HepG2 (cell line): ENCODE measurements at regions of chr9 and their contacts with region 1.

Region 1: DNA sequence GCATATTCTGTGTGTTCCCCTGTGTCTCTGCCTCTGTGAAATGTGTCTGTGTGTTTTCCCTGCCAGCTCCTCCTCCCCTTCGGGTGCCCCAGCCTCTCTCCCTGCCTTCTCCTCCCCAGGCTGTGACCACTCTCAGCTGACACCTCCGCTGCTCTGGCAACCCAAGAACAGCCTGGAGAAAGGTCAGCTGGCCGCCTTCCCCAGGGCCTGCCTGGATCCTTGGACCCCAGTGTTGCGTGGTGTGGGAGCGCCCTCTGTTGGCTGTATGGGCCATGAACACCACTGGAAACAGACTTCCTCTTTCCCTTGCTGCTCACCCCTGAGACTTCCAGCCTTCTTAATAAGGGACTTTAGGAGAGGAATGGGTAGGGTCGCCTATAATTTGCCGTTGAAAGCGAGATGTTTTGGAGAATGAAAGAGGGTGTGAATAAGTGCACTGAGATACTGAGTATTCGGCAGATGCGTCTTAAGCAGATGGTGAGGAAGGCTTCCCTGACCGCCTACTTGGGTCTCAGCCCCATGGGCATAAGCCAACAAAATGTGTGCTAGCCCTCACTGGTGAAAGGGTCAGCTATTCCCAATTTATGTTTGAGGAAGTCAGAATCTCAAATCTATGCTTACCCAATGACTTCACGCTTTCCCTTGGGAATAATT is 114.9 kb upstream of the TRIM32 start:
- DNase-seq: peak; percentile 64
- ATAC-seq: peak; percentile 84
- H3K4me3 ChIP-seq: no peak overlapping the region
- H3K27ac ChIP-seq: no peak overlapping the region
- H3K4me1 ChIP-seq: peaks cover 74% of the 10 kb centered on the region
- H3K27me3 ChIP-seq: no peaks in the 10 kb centered on the region
- CTCF ChIP-seq: peak; percentile 99
- EP300 ChIP-seq: no peak
- POLR2A ChIP-seq: no peak
- RAD21 ChIP-seq: peak; percentile 96

Region 2: DNA sequence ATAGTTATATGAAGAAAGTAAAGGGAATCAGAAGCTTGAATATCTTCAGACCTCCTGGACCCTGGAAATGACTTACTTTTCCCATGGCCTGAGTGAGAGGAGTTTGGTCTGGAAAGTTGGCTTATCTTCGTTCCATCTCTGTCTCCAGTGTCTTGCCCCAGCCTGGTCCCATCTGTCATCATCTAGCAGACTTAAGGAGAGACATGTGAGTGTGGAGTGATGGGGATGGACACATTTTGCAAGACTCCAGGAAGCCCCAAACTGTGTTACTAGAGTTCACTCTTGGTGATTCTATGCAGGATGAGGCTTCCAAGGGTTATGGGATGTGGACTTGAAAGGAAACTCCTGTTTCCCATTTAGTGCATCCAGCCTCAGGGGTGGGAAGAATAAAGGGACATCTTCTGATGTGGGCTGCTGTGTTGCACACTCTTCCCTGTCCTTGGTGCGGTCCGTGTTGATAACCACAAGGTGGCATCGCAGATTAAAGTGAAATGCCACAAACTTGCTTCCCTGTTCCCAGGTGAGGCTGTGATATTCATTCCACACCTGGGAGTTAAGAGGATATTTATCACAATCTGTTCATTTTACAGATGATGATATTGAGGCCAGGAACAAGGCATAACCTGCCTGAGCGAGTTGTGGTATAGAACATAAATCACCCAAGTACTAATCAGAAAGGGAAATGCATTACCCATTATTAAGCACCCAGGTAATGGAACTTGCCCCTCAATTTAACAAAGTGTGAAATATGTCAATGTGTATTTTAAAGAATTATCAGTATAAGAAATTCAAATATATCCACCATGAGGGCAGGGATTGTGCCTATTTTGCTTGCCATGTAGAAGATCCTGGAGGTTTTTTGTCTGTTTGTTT is 688.5 kb before region 1 on chr9:
- CTCF ChIA-PET with region 1: no interaction called
- POLR2A ChIA-PET with region 1: no interaction called
- in situ Hi-C with region 1: no loop called
- intact Hi-C with region 1: loop called (anchors 2 kb)
- DNase-seq: peak; percentile 55
- ATAC-seq: peak; percentile 91
- H3K4me3 ChIP-seq: no peak overlapping the region
- H3K27ac ChIP-seq: no peak overlapping the region
- H3K4me1 ChIP-seq: peaks cover 9% of the 10 kb centered on the region; the same call in 1 of the 2 replicates
- H3K27me3 ChIP-seq: no peaks in the 10 kb centered on the region; a peak in 1 of 5 replicates
- CTCF ChIP-seq: peak; percentile 85
- EP300 ChIP-seq: no peak
- POLR2A ChIP-seq: no peak
- RAD21 ChIP-seq: peak; percentile 68; the same call in 1 of the 2 replicates

Region 3: GRCh38 chr9:116163293-116164055 is 408.7 kb before region 1 on chr9:
- CTCF ChIA-PET with region 1: interaction called, 6 read pairs
- POLR2A ChIA-PET with region 1: no interaction called
- in situ Hi-C with region 1: no loop called
- intact Hi-C with region 1: loop called (anchors 1 kb)
- DNase-seq: peak; percentile 10
- ATAC-seq: peak; percentile 44; the same call in 1 of the 3 replicates
- H3K4me3 ChIP-seq: no peak overlapping the region
- H3K27ac ChIP-seq: no peak overlapping the region
- H3K4me1 ChIP-seq: no peaks in the 10 kb centered on the region
- H3K27me3 ChIP-seq: peaks cover 0 to 31% of the 10 kb centered on the region in 2 experiments; a peak in 4 of 5 replicates
- CTCF ChIP-seq: peak; percentile 46
- EP300 ChIP-seq: no peak
- POLR2A ChIP-seq: no peak
- RAD21 ChIP-seq: 0 out of 2 replicates have a peak, but pooled peaks have one; percentile 15

Region 4: GRCh38 chr9:116494815-116495634 is 77.2 kb before region 1 on chr9:
- CTCF ChIA-PET with region 1: interaction called, 21 read pairs
- POLR2A ChIA-PET with region 1: no interaction called
- in situ Hi-C with region 1: loop called (anchors 5 kb)
- intact Hi-C with region 1: loop called (anchors 1 kb)
- DNase-seq: peak; percentile 26
- ATAC-seq: peak; percentile 77
- H3K4me3 ChIP-seq: no peak overlapping the region
- H3K27ac ChIP-seq: no peak overlapping the region
- H3K4me1 ChIP-seq: peaks cover 2% of the 10 kb centered on the region
- H3K27me3 ChIP-seq: no peaks in the 10 kb centered on the region
- CTCF ChIP-seq: peak; percentile 77
- EP300 ChIP-seq: no peak
- POLR2A ChIP-seq: no peak
- RAD21 ChIP-seq: peak; percentile 52

Region 5: GRCh38 chr9:116661037-116661954 is 89.1 kb after region 1 on chr9:
- CTCF ChIA-PET with region 1: no interaction called
- POLR2A ChIA-PET with region 1: no interaction called
- in situ Hi-C with region 1: no loop called
- intact Hi-C with region 1: loop called (anchors 2 kb)
- DNase-seq: peak; percentile 57
- ATAC-seq: peak; percentile 89
- H3K4me3 ChIP-seq: no peak overlapping the region
- H3K27ac ChIP-seq: no peak overlapping the region
- H3K4me1 ChIP-seq: peaks cover 8% of the 10 kb centered on the region; the same call in 1 of the 2 replicates
- H3K27me3 ChIP-seq: no peaks in the 10 kb centered on the region
- CTCF ChIP-seq: peak; percentile 84
- EP300 ChIP-seq: no peak
- POLR2A ChIP-seq: no peak
- RAD21 ChIP-seq: peak; percentile 71